ENCODE measurements at regions of chr20 and their contacts with region 1.

Region 1: GRCh38 chr20:33460711-33461110 is 17.1 kb upstream of the SNTA1 start:
- DNase-seq: no peak
- ATAC-seq: peak; percentile 8; the same call in 1 of the 2 replicates
- H3K4me3 ChIP-seq: no peak overlapping the region
- H3K27ac ChIP-seq: no peak overlapping the region
- H3K4me1 ChIP-seq: no peaks in the 10 kb centered on the region
- H3K27me3 ChIP-seq: no peaks in the 10 kb centered on the region
- CTCF ChIP-seq: no peak

Region 2: DNA sequence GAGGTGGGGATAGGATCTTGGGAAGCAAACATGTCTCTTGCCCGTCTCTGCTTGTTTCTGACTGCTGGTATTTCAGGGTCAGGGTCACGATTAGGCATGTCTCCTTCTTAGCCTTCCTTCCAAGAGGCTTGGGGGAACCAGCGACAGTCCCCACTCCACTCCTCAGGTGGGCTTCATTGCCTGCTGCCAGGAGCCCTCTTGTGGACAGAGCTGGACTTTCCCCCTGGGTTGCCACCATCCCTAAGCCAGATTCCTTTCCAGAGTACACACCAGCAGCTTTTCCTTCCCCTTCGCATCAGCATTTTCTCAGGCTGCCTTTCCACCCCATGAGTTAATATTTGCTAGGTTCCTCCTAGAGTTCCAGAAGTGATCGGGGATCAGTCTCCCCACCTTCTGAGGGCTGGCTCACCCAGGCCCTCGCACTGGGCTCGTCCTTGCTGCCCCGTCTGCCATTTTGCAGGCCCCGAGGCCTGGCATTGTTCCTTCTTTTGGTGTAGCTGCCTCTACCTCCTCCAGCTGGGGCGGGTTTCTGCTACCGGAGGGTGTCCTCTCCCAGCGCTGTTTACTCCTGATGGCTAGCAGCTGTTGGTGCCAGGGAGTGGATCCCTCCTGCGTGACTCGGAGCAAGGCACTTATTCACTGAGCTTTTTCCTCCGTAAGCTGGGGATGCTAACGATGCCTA is 192.6 kb after region 1 on chr20:
- CTCF ChIA-PET with region 1: interaction called, 5 read pairs
- POLR2A ChIA-PET with region 1: interaction called, 3 read pairs
- intact Hi-C with region 1: loop called (anchors 1 kb)
- DNase-seq: peak; percentile 69
- ATAC-seq: peak; percentile 66
- H3K4me3 ChIP-seq: no peak overlapping the region
- H3K27ac ChIP-seq: no peak overlapping the region
- H3K4me1 ChIP-seq: peaks cover 29% of the 10 kb centered on the region
- H3K27me3 ChIP-seq: no peaks in the 10 kb centered on the region
- CTCF ChIP-seq: peak; percentile 92

Region 3: GRCh38 chr20:33666293-33667244 is 205.9 kb after region 1 on chr20 and contains the start of gene ACTL10:
- CTCF ChIA-PET with region 1: no interaction called
- POLR2A ChIA-PET with region 1: no interaction called
- intact Hi-C with region 1: loop called (anchors 5 kb)
- DNase-seq: peak; percentile 95
- ATAC-seq: peak; percentile 56
- H3K4me3 ChIP-seq: peak within 1 kb of the TSS; percentile 65
- H3K27ac ChIP-seq: peak within 1 kb of the TSS; percentile 23; the same call in 1 of the 2 replicates
- H3K4me1 ChIP-seq: peaks cover 25% of the 10 kb centered on the region; the same call in 1 of the 2 replicates
- H3K27me3 ChIP-seq: no peaks in the 10 kb centered on the region
- CTCF ChIP-seq: no peak
- total RNA-seq, gene ACTL10: 1.6 and 2.8 TPM in 2 replicates